ENCODE measurements at regions of chr15 and their contacts with region 1.

Region 1: DNA sequence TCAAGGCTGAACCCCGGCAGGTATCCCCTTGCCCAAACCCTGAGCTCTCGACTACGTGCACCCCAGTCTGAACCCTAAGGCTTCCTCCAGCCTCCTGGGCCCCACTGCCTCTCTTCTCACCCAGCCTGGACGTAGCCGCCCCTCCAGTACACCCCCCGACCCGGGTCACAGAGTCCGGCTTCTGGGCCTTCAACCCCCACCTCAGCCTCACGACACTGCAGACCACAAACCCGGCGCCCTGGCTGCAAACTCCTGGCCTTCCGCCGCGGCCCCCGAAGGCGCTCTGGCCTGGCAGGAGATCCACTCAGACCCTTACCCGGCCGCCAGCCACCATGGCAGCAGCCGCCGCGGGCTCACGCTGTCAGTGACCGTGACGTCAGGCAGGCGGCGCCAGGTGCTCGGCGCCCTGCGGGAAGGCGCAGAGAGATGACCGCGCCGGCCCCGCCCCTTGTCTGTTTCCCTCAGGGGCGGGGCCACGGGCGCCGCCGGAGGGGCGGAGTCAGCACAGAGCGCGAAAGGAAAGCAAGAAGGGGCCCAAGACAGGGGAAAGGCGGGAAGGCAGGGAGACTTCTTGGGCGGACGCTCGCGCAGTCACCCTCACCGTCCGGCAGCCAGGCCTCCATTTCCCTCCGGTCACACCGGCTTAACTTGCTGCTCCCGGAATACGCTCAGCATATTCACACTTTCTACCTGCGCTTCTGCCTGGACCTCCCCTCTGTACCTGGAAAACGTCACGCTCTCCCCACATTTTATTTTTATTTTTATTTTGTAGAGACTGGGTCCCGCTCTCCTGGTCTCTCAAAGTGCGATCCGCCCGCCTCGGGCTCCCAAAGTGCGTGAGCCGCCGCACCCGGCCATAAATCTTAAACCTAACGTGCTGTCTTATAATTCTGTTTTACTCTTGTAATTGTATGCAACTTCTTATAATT is at the start of gene RMDN3:
- DNase-seq: peak; percentile 62 to 95
- H3K4me3 ChIP-seq: peak within 1 kb of the TSS; percentile 95 to 98
- H3K27ac ChIP-seq: peak within 1 kb of the TSS; percentile 85 to 86
- H3K4me1 ChIP-seq: peaks cover 0 to 12% of the 10 kb centered on the region in 2 donors
- H3K27me3 ChIP-seq: no peaks in the 10 kb centered on the region
- CTCF ChIP-seq: peak in 1 of 3 experiments; percentile 17
- total RNA-seq, gene RMDN3: 6.0 TPM

Region 2: GRCh38 chr15:40593588-40594428 is 161.3 kb before region 1 on chr15 and contains the start of gene KNL1:
- intact Hi-C with region 1: loop called (anchors 2 kb)
- DNase-seq: peak; percentile 72 to 96
- H3K4me3 ChIP-seq: peak within 1 kb of the TSS; percentile 50 to 73
- H3K27ac ChIP-seq: peak within 1 kb of the TSS; percentile 78 to 87
- H3K4me1 ChIP-seq: peaks cover 0 to 9% of the 10 kb centered on the region in 2 donors
- H3K27me3 ChIP-seq: no peaks in the 10 kb centered on the region
- CTCF ChIP-seq: no peak
- total RNA-seq, gene KNL1: not detected

Region 3: GRCh38 chr15:40807028-40807887 is 52.1 kb after region 1 on chr15 and contains the starts of genes DNAJC17 and ZFYVE19:
- intact Hi-C with region 1: loop called (anchors 1 kb)
- DNase-seq: peak; percentile 91 to 98
- H3K4me3 ChIP-seq: peak within 1 kb of the TSS; percentile 77 to 88
- H3K27ac ChIP-seq: peak within 1 kb of the TSS; percentile 89 to 93
- H3K4me1 ChIP-seq: peaks cover 0 to 18% of the 10 kb centered on the region in 2 donors
- H3K27me3 ChIP-seq: no peaks in the 10 kb centered on the region
- CTCF ChIP-seq: peak in 2 of 3 experiments; percentile 5 to 7
- total RNA-seq, gene DNAJC17: 26.2 TPM
- total RNA-seq, gene ZFYVE19: 61.0 TPM

Region 4: GRCh38 chr15:40906091-40906990 is 151.2 kb after region 1 on chr15:
- intact Hi-C with region 1: no loop called
- DNase-seq: peak; percentile 79 to 95
- H3K4me3 ChIP-seq: peak overlapping the region; percentile 32 to 66
- H3K27ac ChIP-seq: peak overlapping the region; percentile 96
- H3K4me1 ChIP-seq: peaks cover 19 to 24% of the 10 kb centered on the region in 2 donors
- H3K27me3 ChIP-seq: no peaks in the 10 kb centered on the region
- CTCF ChIP-seq: peak; percentile 75 to 82 (median 75)

Region 5: GRCh38 chr15:41304149-41304770 is 549.1 kb after region 1 on chr15:
- intact Hi-C with region 1: no loop called
- DNase-seq: no peak
- H3K4me3 ChIP-seq: no peak overlapping the region
- H3K27ac ChIP-seq: no peak overlapping the region
- H3K4me1 ChIP-seq: no peaks in the 10 kb centered on the region
- H3K27me3 ChIP-seq: no peaks in the 10 kb centered on the region
- CTCF ChIP-seq: no peak

Measured in ascending aorta (tissue), 2 donors.